ENCODE measurements at regions of chr3 and their contacts with region 1.

Region 1: DNA sequence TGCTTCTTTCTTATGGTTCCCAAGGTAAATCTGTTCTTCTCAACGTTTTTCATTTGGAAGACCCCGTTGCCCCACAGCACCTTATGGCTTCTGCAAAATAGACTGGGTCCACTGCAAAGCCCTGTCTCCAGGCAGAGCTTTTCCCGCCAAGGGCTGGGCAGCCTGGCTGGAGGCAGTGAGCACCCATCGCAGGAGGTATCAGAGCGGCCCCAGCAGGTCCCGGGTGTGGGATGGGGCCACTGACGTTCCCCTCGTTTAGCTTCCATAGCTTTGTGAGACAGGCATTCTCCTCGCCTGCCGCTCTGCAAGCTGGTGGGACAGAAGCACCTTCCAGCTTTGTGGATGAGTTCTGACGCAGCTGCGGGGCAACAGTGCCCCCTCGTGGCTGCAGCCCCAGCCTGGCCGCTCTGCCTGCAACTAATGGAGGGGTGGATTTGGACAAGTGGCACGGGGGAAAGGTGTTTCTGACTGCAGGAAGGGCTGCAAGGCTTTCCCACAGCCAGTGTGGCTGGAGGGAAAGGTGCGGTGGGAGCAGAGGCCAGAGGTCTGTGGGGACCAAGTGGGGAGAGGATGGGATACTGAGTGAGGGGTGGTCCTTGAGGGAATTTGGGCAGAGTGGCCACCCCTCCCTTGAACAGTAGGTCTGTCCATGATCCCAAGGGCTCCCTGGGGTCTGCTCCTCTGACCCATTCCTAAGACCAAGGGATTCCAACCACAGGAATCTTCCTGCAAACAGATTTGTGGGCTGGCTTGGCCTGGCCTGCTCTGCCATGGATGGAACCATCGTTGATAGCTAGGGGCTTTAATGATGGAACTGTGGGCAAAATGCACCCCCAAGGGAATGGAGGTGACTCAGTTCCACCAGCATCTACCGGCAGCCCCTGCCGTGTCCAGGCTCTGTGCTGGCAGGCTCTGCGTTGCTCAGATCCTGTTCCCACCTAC is 99.4 kb downstream of the FBLN2 start:
- DNase-seq: peak; percentile 82 to 95
- ATAC-seq: peak; percentile 65 to 88
- H3K4me3 ChIP-seq: no peak overlapping the region
- H3K27ac ChIP-seq: peak overlapping the region in 1 of 2 experiments; percentile 50; a peak in 2 of 6 replicates
- H3K4me1 ChIP-seq: peaks cover 7% of the 10 kb centered on the region; the same call in 1 of the 3 replicates
- CTCF ChIP-seq: peak; percentile 95
- EP300 ChIP-seq: no peak
- POLR2A ChIP-seq: no peak
- RAD21 ChIP-seq: peak; percentile 98

Region 2: DNA sequence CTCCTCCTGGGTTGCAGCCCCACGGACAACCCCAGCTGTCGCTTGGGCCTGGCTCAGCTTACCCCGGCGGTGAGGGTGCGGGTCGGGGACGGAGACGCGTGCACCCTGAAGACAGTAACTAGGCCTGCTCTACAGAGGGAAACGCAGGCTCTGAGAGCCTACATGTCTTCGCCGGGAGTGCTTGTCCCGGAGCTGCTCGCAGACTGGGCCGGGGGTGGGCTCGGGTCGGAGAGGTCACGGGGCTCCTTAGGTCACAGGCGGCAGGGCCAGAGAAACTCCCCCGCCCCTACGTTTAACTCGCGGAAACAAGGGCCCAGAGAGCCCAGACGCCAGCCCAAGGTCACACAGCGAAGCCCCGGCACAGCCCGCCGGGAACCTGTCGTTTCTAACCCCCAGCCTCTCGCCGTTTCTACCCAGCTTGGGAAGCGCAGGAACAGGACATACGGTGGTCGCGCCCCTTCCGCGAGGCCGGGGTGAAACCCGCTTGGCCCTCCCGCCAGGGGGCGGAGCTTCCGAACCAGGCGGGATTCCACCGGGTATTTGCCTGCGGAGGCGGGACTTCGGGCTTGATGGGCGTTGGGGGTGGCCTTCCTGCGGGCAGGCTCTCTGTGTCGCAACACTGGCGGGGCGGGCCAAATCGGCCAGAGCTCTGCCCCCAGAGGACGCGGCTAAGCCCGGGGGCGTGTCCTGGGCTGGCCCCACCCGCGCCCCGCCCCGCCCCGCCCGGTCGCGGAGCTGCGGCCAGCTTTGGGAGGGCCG is 168.6 kb before region 1 on chr3 and contains the start of gene HDAC11:
- CTCF ChIA-PET with region 1: interaction called, 124 read pairs
- POLR2A ChIA-PET with region 1: no interaction called
- DNase-seq: peak; percentile 96 to 99
- ATAC-seq: peak; percentile 90 to 95
- H3K4me3 ChIP-seq: peak within 1 kb of the TSS; percentile 77
- H3K27ac ChIP-seq: peak within 1 kb of the TSS; percentile 86 to 93
- H3K4me1 ChIP-seq: peaks cover 15% of the 10 kb centered on the region
- CTCF ChIP-seq: no peak
- EP300 ChIP-seq: no peak
- POLR2A ChIP-seq: peak; percentile 51
- RAD21 ChIP-seq: no peak
- polyA plus RNA-seq, gene HDAC11: 5.6 and 5.8 TPM in 2 replicates

Region 3: DNA sequence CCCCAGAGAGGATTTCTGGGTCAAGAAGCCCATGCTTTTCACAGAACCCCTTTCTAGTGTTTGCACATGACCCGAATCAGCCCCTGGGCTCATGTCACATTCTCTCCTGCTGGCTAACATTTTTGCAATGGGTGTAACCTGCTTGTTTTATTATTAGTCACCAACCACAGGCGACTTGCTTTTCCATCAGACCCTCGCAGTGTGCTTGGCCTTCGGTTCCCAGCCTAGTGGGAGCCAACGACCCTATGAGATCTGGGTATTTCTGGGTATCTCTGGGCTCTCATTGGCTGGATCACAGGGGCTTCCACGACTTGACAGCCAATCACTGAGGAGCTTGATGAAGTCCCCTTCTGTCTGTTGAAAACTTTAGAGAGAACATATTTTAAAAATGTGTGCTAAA is 110.4 kb before region 1 on chr3:
- CTCF ChIA-PET with region 1: interaction called, 24 read pairs
- POLR2A ChIA-PET with region 1: no interaction called
- DNase-seq: peak; percentile 72 to 84
- ATAC-seq: peak; percentile 73 to 87
- H3K4me3 ChIP-seq: no peak overlapping the region
- H3K27ac ChIP-seq: peak overlapping the region; percentile 63 to 83
- H3K4me1 ChIP-seq: peaks cover 45% of the 10 kb centered on the region
- CTCF ChIP-seq: no peak
- EP300 ChIP-seq: 0 out of 5 replicates have a peak, but pooled peaks of 1 of the 2 experiments have one; percentile 20
- POLR2A ChIP-seq: no peak
- RAD21 ChIP-seq: no peak

Region 4: DNA sequence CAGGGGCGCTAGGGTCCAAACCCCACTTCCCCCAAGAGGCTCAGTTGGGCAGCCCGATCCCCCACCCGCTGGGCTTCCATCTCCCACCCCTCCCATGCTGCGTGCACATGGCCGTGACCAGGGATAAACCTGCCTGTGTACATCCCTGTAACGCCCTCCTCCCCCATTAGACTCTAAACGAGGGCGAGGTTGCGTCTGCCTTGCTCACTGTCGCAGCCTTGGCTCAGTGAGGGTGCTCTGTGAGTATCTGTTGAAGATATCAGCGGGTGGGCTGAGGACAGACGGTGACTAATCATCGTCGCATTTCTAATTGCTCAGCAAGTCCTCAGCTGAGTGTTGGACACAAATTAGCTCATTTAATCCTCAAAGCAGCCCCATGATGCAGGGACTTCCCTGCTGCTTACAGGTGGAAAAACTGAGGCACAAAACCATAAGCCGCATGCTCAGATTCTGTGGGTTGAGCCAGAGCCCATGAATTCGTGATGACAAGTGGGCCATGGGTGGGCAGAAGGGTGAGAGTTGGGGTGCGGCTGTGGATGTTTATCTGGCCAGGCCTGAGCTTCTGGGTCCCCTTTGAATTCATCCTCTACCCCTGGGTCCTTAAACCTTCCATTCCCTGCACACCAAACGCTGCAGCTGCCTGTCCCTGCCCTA is 73.4 kb before region 1 on chr3:
- CTCF ChIA-PET with region 1: interaction called, 13 read pairs
- POLR2A ChIA-PET with region 1: no interaction called
- DNase-seq: no peak
- ATAC-seq: no peak
- H3K4me3 ChIP-seq: no peak overlapping the region
- H3K27ac ChIP-seq: no peak overlapping the region
- H3K4me1 ChIP-seq: no peaks in the 10 kb centered on the region
- CTCF ChIP-seq: no peak
- EP300 ChIP-seq: no peak
- POLR2A ChIP-seq: no peak
- RAD21 ChIP-seq: no peak

Region 5: DNA sequence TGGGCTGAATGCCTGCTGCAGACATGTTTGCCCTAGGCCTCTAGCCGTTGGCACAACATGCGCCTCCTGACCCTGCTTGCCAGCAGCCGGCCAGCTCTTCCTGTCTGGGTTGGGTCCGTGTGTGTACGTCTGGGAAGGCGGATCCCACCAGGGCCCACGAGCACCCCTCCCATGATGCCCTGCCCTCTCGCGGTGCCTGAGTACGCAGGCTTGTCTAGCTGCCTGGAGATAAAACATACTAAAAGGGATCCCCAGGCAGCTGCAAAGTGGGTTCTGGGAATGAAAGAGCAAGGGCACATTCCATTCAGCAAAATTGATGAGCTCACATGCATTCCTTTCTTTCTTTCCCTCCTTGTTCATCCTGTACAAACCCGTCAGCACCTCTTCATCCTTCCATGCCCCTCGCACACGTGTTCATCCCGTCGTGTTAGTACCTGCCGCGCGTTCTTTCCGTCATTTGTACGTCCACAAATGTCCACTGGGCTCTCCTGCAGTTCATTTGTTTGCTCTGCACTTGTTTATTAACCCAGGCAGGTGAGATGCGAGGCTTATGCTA is 25.2 kb before region 1 on chr3:
- CTCF ChIA-PET with region 1: interaction called, 32 read pairs
- POLR2A ChIA-PET with region 1: no interaction called
- DNase-seq: no peak
- ATAC-seq: no peak; a peak in 1 of 6 replicates
- H3K4me3 ChIP-seq: no peak overlapping the region
- H3K27ac ChIP-seq: no peak overlapping the region
- H3K4me1 ChIP-seq: no peaks in the 10 kb centered on the region
- CTCF ChIP-seq: no peak
- EP300 ChIP-seq: no peak
- POLR2A ChIP-seq: no peak
- RAD21 ChIP-seq: no peak

Region 6: DNA sequence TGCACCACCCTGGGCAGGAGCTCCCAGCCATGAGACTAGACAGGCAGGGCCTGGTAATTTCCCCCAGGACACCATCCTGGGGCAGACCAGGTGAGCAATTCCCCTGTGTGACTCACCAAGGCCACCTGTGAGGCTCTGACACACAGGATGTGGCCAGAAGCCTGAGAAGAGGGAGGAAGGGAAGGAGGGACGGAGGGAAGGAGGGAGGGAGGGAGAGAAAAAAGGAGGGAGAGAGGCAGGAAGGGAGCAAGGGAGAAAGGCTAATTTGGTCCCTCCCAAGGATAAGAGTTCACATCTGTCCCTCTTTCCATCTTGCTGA is 205.6 kb after region 1 on chr3:
- CTCF ChIA-PET with region 1: no interaction called
- POLR2A ChIA-PET with region 1: no interaction called
- DNase-seq: no peak
- ATAC-seq: no peak
- H3K4me3 ChIP-seq: no peak overlapping the region
- H3K27ac ChIP-seq: no peak overlapping the region
- H3K4me1 ChIP-seq: no peaks in the 10 kb centered on the region
- CTCF ChIP-seq: no peak
- EP300 ChIP-seq: no peak
- POLR2A ChIP-seq: no peak
- RAD21 ChIP-seq: no peak